Activated naive CD4-positive, alpha-beta T cell treated with anti-CD3 and anti-CD28 coated beads for 36 hours (primary cell): ENCODE measurements at regions of chr3 and their contacts with region 1.

Region 1: GRCh38 chr3:84547971-84548970 is 410.5 kb upstream of the CADM2 start:
- DNase-seq: no peak
- H3K4me3 Mint-ChIP-seq: no peak overlapping the region
- H3K27ac Mint-ChIP-seq: no peak overlapping the region
- H3K4me1 Mint-ChIP-seq: no peaks in the 10 kb centered on the region
- H3K27me3 Mint-ChIP-seq: no peaks in the 10 kb centered on the region

Region 2: GRCh38 chr3:84504761-84505160 is 43.5 kb before region 1 on chr3:
- CTCF ChIA-PET with region 1: no interaction called
- intact Hi-C with region 1: no loop called
- DNase-seq: no peak
- H3K4me3 Mint-ChIP-seq: no peak overlapping the region
- H3K27ac Mint-ChIP-seq: no peak overlapping the region
- H3K4me1 Mint-ChIP-seq: no peaks in the 10 kb centered on the region
- H3K27me3 Mint-ChIP-seq: no peaks in the 10 kb centered on the region

Region 3: DNA sequence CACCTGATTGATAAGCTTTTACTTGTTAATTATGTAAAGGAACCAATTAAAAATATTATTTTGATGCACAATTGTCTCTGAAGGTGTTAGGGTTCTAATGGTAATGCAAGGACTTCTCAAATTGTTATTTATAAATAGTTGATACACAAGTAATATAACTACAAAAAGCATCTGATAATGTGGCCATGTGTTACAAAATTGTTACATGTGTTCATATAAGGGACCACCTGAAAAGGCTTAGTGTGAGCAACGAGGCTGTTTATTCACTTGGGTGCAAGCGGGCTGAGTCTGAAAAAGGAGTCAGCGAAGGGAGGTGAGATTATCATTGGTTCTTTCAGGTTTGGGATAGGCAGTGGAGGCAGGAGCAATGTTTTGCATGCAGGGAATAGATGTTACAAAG is 11.4 kb before region 1 on chr3:
- CTCF ChIA-PET with region 1: no interaction called
- intact Hi-C with region 1: no loop called
- DNase-seq: no peak
- H3K4me3 Mint-ChIP-seq: no peak overlapping the region
- H3K27ac Mint-ChIP-seq: no peak overlapping the region
- H3K4me1 Mint-ChIP-seq: no peaks in the 10 kb centered on the region
- H3K27me3 Mint-ChIP-seq: no peaks in the 10 kb centered on the region

Region 4: DNA sequence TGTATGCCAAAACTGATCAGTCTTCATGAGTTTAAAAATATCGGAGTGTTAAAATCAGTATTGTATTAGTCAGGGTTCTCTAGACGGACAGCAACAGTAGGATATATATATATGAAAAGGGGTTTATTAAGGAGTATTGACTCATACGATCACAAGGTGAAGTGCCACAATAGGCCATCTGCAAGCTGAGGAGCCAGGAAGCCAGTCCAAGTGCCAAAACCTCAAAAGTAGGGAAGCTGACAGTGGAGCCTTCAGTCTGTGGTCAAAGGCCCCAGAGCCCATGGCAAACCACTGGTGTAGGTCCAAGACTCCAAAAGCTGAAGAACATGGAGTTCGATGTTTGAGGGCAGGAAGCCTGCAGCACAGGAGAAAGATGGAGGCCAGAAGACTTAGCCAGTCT is 19.5 kb after region 1 on chr3:
- CTCF ChIA-PET with region 1: no interaction called
- intact Hi-C with region 1: no loop called
- DNase-seq: no peak
- H3K4me3 Mint-ChIP-seq: no peak overlapping the region
- H3K27ac Mint-ChIP-seq: no peak overlapping the region
- H3K4me1 Mint-ChIP-seq: no peaks in the 10 kb centered on the region
- H3K27me3 Mint-ChIP-seq: no peaks in the 10 kb centered on the region

Region 5: DNA sequence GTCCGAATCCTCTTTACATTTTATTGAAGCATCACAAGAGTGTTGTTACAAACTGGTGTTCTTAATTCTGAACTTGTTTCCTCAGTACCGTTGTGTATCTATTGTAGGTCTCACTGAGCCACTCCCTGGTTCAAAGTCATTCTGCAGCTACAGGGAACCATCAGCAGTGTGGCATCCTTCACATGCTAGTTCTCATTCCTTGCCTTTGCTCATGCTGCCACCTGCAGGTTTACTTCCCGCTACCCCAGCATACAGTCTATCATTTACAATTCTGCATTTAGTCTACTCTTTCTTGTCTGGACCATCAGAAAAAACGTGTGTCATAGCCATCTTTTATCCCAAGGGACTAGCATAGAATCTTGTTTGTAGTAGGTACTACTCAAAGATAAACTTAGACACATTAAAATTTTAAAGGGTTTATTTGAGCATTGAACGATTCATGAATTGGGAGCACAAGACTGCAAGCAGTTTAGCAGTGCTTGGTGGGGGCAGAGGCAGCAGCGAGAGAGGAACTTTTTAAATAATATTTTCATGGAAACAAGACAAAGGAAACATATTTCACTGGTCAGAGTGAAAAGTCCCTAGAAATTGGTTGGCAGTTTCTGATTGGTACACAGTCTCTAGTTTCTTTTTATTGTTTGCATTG is 812.6 kb after region 1 on chr3:
- CTCF ChIA-PET with region 1: no interaction called
- intact Hi-C with region 1: loop called (anchors 1 kb)
- DNase-seq: peak; percentile 27
- H3K4me3 Mint-ChIP-seq: no peak overlapping the region
- H3K27ac Mint-ChIP-seq: no peak overlapping the region
- H3K4me1 Mint-ChIP-seq: no peaks in the 10 kb centered on the region
- H3K27me3 Mint-ChIP-seq: no peaks in the 10 kb centered on the region

Region 6: DNA sequence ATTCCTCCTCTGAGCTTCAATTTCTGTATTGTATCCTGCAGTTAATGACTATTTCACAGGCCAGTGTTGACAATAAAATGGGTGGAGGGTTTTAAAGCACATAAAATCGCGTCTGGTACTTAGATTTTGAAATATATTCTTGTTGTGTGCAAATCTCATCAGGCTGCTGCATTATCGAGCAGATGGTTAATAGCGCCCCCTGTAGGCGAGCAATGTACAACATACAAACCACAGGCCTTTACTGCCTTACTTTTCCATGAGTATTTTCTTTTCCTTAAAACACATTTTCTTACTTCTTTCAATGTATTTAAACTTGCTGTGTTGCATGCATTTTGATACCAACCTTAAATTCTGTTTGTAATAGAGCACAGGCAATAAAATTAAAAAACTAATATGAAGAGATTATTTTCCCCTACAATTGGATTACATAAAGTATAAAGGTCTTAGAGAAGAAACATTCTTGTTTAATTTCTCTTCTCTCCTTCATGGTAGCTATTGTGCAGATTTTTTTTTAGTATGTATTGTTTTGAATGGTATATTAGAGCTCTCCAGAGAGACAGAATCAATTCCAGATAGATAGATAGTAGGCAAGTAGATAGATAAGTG is 1018.9 kb after region 1 on chr3:
- CTCF ChIA-PET with region 1: no interaction called
- intact Hi-C with region 1: loop called (anchors 2 kb)
- DNase-seq: peak; percentile 51
- H3K4me3 Mint-ChIP-seq: no peak overlapping the region
- H3K27ac Mint-ChIP-seq: no peak overlapping the region
- H3K4me1 Mint-ChIP-seq: no peaks in the 10 kb centered on the region
- H3K27me3 Mint-ChIP-seq: no peaks in the 10 kb centered on the region

Region 7: DNA sequence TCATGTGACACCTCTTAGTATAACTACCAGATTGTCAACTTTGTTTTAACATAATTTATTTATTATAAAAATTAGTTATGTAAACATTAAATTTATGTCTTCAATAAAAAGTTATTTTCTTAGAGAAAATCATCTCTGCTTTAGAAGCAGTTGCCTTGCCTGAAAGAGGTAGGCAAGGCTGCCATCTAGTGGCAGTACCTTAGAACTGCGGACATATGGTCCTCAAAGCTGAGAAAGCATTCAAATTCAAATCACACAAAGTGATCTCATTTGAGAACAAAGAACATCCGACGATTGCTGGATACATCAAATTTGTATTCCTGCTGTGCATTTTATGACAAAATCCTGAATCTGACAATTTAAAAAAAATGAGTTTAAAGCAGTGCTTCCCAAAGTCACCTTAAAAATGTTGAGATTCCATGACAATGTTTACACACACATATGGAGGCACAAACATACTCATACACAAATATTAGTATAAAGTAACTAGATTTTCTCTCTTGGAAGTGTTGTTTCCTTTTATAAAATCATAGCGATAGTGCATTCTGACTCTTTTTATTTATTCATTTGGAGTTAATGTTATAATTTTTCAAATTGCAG is 1027.9 kb after region 1 on chr3:
- CTCF ChIA-PET with region 1: interaction called, 4 read pairs
- intact Hi-C with region 1: loop called (anchors 1 kb)
- DNase-seq: peak; percentile 69
- H3K4me3 Mint-ChIP-seq: no peak overlapping the region
- H3K27ac Mint-ChIP-seq: no peak overlapping the region
- H3K4me1 Mint-ChIP-seq: no peaks in the 10 kb centered on the region
- H3K27me3 Mint-ChIP-seq: no peaks in the 10 kb centered on the region

Region 8: DNA sequence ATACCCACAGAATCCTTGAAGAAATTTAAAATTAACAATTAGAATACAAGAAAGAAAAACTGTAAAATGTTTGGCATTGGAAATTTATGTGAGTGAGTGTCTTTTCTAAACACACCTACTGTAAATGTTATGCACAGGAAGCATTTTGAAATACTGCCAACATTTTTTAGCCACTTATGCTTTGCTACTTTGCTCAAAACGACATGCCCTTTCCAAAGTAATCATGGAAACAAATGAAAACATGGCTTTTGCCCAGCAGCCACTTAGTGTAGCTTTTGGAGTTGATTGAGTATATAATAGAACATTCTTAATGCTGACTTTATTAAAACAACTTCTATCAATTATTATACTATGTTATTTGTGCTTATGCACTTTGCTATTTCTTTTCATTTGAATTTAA is 1233.5 kb after region 1 on chr3:
- CTCF ChIA-PET with region 1: no interaction called
- intact Hi-C with region 1: no loop called
- DNase-seq: no peak
- H3K4me3 Mint-ChIP-seq: no peak overlapping the region
- H3K27ac Mint-ChIP-seq: no peak overlapping the region
- H3K4me1 Mint-ChIP-seq: no peaks in the 10 kb centered on the region
- H3K27me3 Mint-ChIP-seq: no peaks in the 10 kb centered on the region